ENCODE measurements at regions of chr1 and their contacts with region 1.

Region 1: DNA sequence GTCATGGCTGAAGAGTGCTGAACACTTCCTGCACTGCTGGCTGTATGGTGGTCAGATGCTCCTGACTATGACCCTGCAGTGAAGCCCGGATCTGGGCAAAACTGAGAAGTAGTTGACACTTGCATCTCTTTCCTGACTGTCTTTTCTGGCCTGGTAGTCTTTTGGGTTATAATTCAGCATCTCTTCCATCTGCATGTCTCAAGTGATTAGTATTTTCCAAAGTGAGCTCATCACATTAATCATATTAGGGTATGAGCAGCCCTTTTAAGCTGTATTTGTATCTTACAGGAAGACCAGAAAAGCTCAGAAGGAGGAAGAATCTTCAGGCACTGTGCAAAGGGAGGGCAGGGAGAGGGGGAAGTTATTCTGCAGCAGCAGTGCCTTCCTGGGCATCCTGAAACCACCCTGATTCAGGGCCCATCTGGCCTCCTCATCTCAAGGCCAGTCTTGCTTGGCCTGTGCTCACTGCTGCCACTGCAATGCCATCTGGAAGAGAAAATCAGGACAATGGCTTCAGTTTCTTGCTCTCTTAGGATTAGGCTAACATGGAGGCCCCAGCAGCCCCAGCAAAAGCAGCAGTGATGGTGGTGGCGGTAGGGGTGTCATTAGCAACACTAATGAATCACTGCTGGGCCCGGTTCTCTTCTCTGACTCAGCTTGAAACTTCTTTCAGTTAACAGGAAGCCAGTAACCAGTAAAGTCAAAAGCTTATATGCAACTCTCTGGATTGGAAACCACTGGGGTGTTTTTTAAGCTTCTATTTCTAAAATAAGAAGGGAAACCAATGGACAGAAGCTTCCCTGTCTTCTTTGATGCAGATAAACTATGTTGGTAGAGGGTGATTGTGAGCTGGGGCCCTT is 63.3 kb upstream of the WDR26 start:
- DNase-seq: peak; percentile 73 to 89
- H3K4me3 ChIP-seq: peak overlapping the region; percentile 39; the same call in 1 of the 2 replicates
- H3K27ac ChIP-seq: peak overlapping the region; percentile 99
- H3K4me1 ChIP-seq: peaks cover 57% of the 10 kb centered on the region
- H3K27me3 ChIP-seq: no peaks in the 10 kb centered on the region
- CTCF ChIP-seq: no peak

Region 2: DNA sequence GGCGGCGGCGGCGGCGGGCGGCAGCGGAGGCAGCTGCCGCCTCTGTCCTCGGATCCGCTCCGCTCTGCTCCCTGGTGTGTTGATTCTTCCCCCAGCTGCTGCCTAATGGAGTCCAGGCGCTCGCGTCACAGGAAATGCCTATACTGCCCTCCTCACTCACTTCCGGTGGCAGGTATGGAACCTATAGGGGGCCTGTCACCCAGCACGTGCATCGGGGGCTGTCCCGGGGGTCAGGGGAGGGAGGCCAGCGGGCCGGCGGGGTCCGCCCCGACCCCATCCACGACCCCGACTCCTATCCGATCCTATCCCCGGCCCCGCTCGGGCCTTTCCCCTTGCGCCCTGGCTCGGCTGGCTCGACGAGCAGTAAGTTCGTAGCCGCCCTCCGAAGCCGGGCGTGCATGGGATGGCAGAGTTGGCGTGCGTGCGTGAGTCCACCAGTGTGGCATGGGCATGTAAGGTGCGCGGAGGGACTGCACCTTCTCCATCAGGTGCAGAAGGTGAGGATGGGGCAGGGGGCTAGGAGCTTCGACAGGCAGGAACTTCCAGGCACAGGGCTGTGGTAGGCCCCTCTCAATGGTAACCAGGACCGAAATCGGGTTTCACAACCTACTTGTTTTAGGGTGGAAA is 63.1 kb before region 1 on chr1 and contains the start of gene WDR26:
- CTCF ChIA-PET with region 1: no interaction called
- POLR2A ChIA-PET with region 1: no interaction called
- intact Hi-C with region 1: loop called (anchors 1 kb)
- DNase-seq: peak; percentile 76 to 78
- H3K4me3 ChIP-seq: peak within 1 kb of the TSS; percentile 87
- H3K27ac ChIP-seq: peak within 1 kb of the TSS; percentile 71
- H3K4me1 ChIP-seq: peaks cover 50% of the 10 kb centered on the region
- H3K27me3 ChIP-seq: no peaks in the 10 kb centered on the region
- CTCF ChIP-seq: 0 out of 2 replicates have a peak, but pooled peaks have one; percentile 17
- total RNA-seq, gene WDR26: 76.0 and 88.9 TPM in 2 replicates

Region 3: DNA sequence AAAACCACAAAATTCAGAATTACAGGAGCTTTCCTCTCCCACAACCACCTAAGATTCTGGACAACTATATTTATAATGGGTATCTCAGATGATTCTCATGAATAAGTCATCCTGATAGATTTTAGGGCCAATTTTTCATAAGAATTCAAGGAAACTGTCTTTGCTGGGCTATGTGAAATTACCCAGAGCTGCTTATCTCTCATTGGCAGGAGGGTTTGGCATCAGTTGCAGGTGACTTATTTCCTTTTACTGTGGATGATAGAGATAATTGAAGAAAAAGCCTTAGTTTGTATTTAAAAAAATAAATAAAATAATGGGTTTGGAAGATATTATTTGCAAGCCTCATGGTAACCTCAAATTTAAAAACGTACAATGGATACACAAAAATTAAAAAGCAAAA is 25.1 kb before region 1 on chr1:
- CTCF ChIA-PET with region 1: no interaction called
- POLR2A ChIA-PET with region 1: no interaction called
- intact Hi-C with region 1: no loop called
- DNase-seq: no peak
- H3K4me3 ChIP-seq: no peak overlapping the region
- H3K27ac ChIP-seq: no peak overlapping the region
- H3K4me1 ChIP-seq: no peaks in the 10 kb centered on the region
- H3K27me3 ChIP-seq: no peaks in the 10 kb centered on the region
- CTCF ChIP-seq: no peak

Region 4: GRCh38 chr1:225146478-225146877 is 648.5 kb after region 1 on chr1:
- CTCF ChIA-PET with region 1: no interaction called
- POLR2A ChIA-PET with region 1: no interaction called
- intact Hi-C with region 1: no loop called
- DNase-seq: no peak
- H3K4me3 ChIP-seq: no peak overlapping the region
- H3K27ac ChIP-seq: no peak overlapping the region
- H3K4me1 ChIP-seq: no peaks in the 10 kb centered on the region
- H3K27me3 ChIP-seq: no peaks in the 10 kb centered on the region
- CTCF ChIP-seq: no peak

Measured in PC-9 (cell line).